Pancreas (tissue), 10 donors: ENCODE measurements at regions of chr18 and their contacts with region 1.

Region 1: GRCh38 chr18:59459369-59460079 is 100.5 kb upstream of the LMAN1 start:
- DNase-seq: no peak
- ATAC-seq: peak; percentile 53 to 83 (median 78)
- H3K4me3 ChIP-seq: no peak overlapping the region
- H3K27ac ChIP-seq: no peak overlapping the region
- H3K4me1 ChIP-seq: peaks cover 0 to 5% (median 3%) of the 10 kb centered on the region in 3 donors
- H3K27me3 ChIP-seq: no peaks in the 10 kb centered on the region
- CTCF ChIP-seq: peak; percentile 16 to 51 (median 27)

Region 2: GRCh38 chr18:59141294-59142068 is 318.0 kb before region 1 on chr18:
- intact Hi-C with region 1: no loop called
- DNase-seq: no peak
- ATAC-seq: peak in 2 of 4 donors; percentile 2 to 4
- H3K4me3 ChIP-seq: peak overlapping the region in 2 of 4 donors; percentile 83 to 93
- H3K27ac ChIP-seq: peak overlapping the region in 2 of 4 donors; percentile 3 to 31
- H3K4me1 ChIP-seq: peaks cover 11 to 27% (median 20%) of the 10 kb centered on the region in 3 donors
- H3K27me3 ChIP-seq: no peaks in the 10 kb centered on the region
- CTCF ChIP-seq: no peak

Region 3: GRCh38 chr18:59823596-59824195 is 364.2 kb after region 1 on chr18:
- intact Hi-C with region 1: loop called in 2 of 3 experiments (anchors 5 to 10 kb)
- DNase-seq: peak in 4 of 6 donors; percentile 31 to 65 (median 48)
- ATAC-seq: peak; percentile 61 to 84 (median 81)
- H3K4me3 ChIP-seq: no peak overlapping the region
- H3K27ac ChIP-seq: no peak overlapping the region
- H3K4me1 ChIP-seq: no peaks in the 10 kb centered on the region
- H3K27me3 ChIP-seq: peaks cover 0 to 7% (median 0%) of the 10 kb centered on the region in 4 donors
- CTCF ChIP-seq: peak; percentile 48 to 68 (median 56)

Region 4: DNA sequence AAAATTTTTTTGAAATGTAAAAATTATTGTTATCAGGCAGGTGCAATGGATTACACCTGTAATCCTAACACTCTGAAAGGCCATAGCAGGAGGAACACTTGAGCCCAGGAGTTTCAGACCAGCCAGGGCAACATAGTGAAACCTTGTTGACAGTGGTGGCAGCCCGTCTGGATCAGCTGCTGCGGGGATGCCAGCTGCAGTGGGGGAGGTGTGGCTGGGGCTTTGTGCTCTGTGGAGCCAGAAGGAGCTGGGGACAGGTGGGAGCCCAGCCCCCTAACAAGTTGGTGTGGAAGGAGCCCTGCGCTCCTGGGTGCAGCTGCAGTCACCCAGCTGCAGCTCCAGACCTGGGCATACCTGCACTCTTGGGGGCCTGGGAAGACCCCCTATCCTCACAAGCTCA is 1095.4 kb after region 1 on chr18:
- intact Hi-C with region 1: loop called in 1 of 3 experiments (anchors 10 kb)
- DNase-seq: peak in 1 of 6 donors; percentile 40
- ATAC-seq: no peak
- H3K4me3 ChIP-seq: no peak overlapping the region
- H3K27ac ChIP-seq: no peak overlapping the region
- H3K4me1 ChIP-seq: no peaks in the 10 kb centered on the region
- H3K27me3 ChIP-seq: no peaks in the 10 kb centered on the region
- CTCF ChIP-seq: no peak